GM18951 (cell line): ENCODE measurements at regions of chr15 and their contacts with region 1.

Region 1: DNA sequence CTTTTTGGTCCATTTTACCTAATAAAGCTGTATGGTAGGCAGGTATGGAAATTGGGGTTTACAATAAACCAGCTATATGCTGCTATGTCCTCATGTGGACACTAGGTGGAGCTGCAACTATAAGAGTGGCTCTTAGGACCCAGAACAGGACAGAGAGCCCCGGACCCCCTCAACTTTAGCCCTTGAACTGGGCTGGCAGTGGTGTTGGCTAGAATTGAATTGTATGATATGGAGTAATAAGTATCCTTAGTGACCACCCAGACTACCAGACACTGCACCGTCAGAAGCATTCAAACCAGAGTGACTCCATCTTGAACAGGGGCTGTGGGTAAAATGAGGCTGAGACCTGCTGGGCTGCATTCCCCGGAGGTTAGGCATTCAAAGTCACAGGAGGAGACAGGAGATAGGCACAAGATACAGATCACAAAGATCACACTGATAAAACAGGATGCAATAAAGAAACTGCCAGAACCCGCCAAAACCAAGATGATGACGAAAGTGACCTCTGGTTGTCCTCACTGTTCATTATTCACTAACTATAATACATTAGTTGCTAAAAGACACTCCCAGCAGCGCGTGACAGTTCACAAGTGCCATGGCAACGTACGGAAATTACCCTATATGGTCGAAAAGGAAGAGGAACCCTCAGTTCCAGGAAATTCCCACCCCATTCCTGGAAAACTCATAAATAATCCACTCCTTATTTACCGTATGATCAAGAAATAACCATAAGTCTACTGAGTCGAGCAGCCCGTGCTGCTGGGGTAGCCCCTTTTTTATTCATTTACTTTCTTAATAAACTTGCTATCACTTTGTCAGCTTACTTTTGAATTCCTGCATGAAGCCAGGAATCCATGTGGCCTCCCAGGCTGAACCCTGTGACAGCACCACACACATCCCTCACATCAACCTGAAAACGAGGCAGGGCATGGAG is 68.7 kb upstream of the BLM start:
- POLR2A ChIP-seq: no peak

Region 2: DNA sequence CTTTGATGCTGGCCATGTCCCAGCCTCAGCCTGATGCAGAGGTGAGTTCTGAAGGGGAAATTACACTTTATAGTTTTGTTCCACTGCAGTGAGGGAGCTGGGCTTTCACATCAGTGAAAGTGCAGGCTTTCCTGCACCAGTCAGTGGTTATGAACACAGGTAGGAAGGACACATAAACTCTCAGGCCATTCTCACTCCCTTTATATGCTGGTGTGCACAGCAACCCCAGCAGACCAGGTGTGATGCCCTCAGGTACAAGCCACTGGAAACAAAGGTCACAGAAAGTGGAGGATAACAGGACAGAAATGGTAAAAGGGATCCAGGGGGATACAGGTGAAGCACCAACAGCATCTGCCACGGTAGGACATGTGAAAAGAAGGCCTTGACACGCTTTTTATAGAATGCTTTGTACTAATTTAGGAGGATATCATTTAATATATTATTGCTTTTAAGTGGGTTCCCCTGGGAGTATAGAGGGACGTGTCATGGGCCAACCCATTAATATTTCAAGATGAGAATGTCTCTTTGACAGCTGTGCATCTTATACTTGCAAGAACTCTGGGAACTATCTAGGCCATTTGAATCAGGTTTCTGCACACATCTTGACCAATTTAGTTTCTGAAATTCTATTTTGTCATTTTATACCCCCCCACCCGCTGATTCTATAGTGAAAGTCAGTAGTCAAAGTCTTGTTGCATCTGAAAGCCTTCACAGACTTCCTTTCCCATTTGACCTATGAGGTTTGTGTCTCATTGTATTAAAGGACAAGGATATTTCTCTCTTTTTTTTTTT is 43.8 kb after region 1 on chr15:
- in situ Hi-C with region 1: loop called (anchors 5 kb)
- POLR2A ChIP-seq: no peak

Region 3: DNA sequence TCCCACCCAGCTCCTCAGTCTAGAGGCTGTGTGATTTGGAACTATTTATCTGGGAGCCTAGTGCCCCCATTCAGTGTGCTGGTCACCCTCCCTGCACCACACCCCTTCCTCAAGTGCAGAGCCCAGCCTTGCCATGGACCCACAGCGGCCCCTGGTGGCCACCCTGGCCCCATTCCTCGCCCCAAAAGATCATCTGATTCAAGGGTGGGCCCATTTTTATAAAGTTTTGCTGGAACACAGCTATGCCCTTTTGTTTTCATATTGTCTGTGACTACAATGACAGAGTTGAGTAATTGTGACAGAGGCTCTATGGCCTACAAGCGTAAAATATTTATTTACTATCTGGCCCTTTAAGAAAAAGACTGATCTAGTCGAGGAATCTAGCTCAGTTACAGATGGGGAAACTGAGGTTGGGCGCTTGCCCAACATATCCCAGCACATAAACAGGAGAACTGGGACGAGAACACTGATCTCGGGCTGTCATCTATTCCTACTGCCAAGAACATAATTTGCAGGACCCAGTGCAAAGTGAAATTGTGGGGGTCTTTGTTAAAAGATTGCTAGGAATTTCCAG is 237.7 kb after region 1 on chr15:
- in situ Hi-C with region 1: loop called (anchors 10 kb)
- POLR2A ChIP-seq: no peak